ENCODE measurements at regions of chr9 and their contacts with region 1.

Region 1: GRCh38 chr9:36036780-36037548 is at the start of gene RECK:
- DNase-seq: peak; percentile 83 to 94 (median 91)
- H3K4me3 ChIP-seq: peak within 1 kb of the TSS; percentile 61 to 99 (median 87)
- H3K27ac ChIP-seq: peak within 1 kb of the TSS in 57 of 59 donors; percentile 33 to 90 (median 79)
- H3K27me3 ChIP-seq: no peaks in the 10 kb centered on the region
- CTCF ChIP-seq: peak in 12 of 56 donors; percentile 3 to 44 (median 22)
- total RNA-seq, gene RECK: 6.6 to 15.7 (median 11.5) TPM

Region 2: DNA sequence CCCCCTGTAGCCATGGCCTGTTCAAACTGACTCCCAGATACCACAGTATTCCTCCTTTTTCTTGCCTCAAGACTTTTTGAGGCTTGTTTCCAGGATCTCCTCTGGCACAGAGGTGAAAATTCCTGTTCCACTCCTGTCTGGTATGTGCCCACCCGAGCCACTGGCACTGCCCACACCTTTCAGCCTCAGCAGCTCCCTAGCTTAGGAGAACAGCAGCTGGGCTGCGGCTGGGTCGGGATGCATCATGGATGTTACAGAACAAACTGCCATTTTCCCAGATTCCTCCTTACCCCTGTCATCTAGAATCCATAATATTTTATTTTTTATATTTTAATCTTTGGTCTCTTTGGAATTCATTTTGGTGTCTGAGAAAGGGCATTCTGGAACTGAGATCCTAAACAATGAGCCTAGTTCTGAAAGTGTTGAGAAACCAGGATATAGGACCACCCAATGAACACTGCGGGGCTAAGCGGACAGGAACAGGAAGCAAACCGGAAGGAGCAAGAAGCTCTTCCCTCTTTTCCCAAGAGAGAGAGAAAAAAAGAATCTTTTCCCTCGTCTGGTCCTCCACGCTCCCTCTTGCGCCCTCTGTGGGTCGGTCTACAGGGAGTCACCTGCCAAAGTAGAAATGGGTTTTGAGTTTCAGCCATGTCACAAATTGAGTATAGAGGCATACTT is 91.5 kb before region 1 on chr9:
- intact Hi-C with region 1: no loop called
- DNase-seq: peak in 9 of 10 donors; percentile 44 to 75 (median 57)
- H3K4me3 ChIP-seq: peak overlapping the region in 44 of 59 donors; percentile 9 to 60 (median 35)
- H3K27ac ChIP-seq: peak overlapping the region in 6 of 59 donors; percentile 8 to 46 (median 21)
- H3K27me3 ChIP-seq: no peaks in the 10 kb centered on the region
- CTCF ChIP-seq: peak; percentile 42 to 87 (median 77)

Region 3: DNA sequence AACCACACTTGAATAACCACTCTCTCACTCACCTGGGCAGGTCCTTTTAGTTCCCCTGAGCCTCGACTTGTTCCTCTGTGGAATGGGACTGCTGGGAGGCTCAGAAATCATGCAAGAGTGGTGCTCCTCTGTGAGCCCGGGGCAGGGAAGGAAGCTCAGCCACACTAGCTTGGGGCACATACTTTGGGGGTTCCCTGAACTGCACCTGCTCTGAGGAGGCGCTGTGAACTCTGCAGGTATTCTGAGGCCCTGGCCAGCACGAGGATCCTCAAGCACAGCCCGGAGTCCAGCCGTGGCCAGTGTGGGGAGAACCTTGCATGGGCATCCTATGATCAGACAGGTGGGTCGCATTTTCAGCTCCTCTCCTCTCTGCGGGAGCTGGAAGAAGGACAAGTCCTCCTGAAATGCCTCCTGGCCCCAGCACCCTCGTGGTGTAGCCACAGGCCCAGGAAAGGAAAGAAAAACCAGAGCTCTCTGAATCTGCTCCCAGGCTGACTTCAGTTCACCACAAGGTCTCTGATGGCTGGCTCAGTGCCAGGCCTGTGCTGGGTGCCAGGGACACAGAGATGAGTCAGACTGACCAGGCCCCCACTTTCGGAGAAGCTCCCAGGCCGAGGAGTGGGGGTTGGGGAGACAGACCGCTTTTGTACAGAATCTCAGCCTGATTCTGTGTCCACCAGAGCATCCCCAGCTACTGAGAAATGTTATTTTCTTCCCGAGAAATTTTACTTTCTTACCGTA is 111.5 kb after region 1 on chr9:
- intact Hi-C with region 1: loop called in 1 of 2 experiments (anchors 5 kb)
- DNase-seq: peak; percentile 93 to 99 (median 97)
- H3K4me3 ChIP-seq: peak overlapping the region in 18 of 59 donors; percentile 0 to 46 (median 24)
- H3K27ac ChIP-seq: peak overlapping the region; percentile 86 to 99 (median 94)
- H3K27me3 ChIP-seq: no peaks in the 10 kb centered on the region
- CTCF ChIP-seq: peak in 36 of 56 donors; percentile 3 to 57 (median 24)

Region 4: DNA sequence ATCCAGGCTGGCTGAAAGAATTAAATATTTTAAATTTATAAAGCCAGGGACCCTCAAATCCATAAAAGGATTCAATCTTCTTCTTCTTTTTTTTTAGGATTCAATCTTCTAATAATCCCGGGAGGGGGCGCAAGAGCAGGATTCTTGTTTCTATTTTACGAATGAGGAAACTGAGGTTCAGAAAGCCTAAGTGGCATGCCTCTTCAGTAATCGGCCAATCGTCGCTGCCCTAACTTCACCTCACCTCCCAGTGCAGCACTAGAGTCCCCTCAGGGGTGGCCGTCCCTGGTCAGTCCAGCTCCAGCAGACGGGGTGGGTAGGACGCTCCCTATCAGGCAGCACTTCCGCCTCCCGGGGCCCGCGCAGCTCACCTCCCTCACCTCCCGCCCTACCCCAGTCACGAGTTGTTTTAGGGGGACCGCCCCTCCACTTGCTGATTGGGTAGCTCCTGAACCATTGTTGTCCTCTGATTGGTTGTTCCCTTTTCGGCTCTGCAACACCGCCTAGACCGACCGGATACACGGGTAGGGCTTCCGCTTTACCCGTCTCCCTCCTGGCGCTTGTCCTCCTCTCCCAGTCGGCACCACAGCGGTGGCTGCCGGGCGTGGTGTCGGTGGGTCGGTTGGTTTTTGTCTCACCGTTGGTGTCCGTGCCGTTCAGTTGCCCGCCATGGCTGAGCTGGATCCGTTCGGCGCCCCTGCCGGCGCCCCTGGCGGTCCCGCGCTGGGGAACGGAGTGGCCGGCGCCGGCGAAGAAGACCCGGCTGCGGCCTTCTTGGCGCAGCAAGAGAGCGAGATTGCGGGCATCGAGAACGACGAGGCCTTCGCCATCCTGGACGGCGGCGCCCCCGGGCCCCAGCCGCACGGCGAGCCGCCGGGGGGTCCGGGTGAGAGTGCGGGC is 153.7 kb after region 1 on chr9 and contains the start of gene CLTA:
- intact Hi-C with region 1: loop called in 1 of 2 experiments (anchors 10 kb)
- DNase-seq: peak; percentile 93 to 99 (median 98)
- H3K4me3 ChIP-seq: peak within 1 kb of the TSS; percentile 68 to 100 (median 93)
- H3K27ac ChIP-seq: peak within 1 kb of the TSS; percentile 74 to 98 (median 93)
- H3K27me3 ChIP-seq: no peaks in the 10 kb centered on the region
- CTCF ChIP-seq: peak; percentile 43 to 82 (median 70)
- total RNA-seq, gene CLTA: 76.4 to 215 (median 173) TPM

Measured in dorsolateral prefrontal cortex (tissue), 120 donors.